GM12878 (cell line): ENCODE measurements at regions of chr14 and their contacts with region 1.

Region 1: DNA sequence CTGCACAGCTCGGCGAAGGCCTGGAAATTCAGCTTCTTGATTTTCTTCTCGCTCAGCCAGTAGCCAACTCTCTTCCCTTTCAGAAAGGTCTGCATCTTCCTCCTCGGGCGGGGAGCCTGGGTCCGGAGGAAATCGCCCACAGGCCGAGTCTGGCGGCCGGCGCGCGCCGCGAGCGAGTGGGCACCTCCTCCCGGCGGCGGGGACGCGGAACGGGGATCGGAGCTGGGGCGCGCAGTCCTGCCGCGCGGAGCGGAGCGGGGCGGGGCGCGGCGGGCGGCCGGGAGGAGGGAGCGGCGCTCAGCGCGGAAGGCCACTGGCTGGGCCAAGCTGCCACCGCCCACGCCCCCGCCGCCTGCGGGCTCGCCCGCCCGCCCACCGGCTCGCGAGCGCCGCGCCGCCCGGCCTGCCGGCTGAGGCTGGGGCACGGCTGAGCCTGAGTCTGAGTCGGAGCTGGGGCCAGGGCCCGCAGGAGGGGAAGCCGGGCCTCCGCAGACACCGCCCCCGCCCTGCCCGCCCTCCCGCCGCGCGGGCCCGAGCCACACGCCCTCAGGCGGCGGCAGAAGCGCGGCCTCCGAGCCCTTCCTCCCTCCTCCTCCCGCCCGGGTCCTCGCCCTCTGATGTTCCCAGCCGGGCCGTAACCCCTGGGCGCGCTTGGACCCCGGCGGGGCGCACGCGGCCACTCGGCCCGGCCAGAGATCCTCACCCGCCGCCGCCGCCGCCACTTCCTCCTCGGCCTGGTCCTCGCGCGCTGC is 480 bp downstream of the ITPK1 start:
- DNase-seq: peak; percentile 33
- ATAC-seq: peak; percentile 79
- H3K4me3 ChIP-seq: peak overlapping the region; percentile 99
- H3K27ac ChIP-seq: peak overlapping the region; percentile 38
- H3K4me1 ChIP-seq: peaks cover 13% of the 10 kb centered on the region
- H3K27me3 ChIP-seq: no peaks in the 10 kb centered on the region
- CTCF ChIP-seq: peak in 1 of 3 experiments; percentile 1; a peak in 1 of 6 replicates
- EP300 ChIP-seq: no peak
- POLR2A ChIP-seq: peak; percentile 66; the same call in 1 of the 2 replicates
- RAD21 ChIP-seq: no peak

Region 2: DNA sequence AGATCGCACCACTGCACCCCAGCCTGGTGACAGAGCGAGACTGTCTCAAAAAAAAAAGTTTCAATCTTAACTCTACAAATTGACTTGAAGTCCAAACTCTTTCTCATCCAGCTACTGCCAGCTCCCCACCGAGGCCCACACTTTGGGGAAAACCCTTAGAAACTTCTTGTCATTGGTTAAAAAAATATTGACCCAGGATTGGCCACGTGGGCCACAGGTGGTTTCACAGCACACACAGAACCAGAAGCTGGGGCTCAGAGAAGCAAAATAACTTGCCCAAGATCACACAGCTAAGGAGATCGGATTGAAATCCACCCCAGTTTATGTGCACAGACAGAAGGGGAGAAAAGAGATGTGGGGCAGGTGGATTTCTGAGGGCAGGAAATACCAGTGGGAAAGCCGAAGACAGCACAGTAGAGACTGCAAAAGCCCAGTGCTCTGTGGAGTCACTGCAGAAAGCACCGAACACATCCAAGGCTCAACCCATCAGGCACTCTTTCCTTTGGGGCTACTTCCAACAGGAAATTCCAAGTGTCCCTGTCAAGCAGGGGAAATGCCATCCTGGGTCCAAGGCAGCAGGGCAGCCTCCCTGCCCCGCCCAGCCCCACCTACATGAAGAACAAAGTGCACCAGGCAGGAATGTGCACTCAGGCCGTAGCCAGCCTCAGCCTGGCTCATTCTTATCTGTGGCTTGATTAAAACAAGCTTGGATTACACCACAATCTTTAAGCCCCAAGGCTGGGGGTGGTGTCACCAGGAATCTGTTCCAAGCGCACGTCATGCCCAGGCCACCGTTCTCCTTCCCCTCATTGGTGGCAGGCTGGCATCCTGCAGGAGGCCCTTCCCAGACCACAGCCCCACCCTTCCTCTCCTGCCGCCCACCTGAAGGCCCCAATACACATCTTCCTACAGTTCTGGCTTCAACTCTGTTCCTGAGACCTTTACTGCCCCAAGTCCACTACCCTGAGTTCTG is 72.0 kb before region 1 on chr14:
- CTCF ChIA-PET with region 1: interaction called, 13 read pairs
- POLR2A ChIA-PET with region 1: no interaction called
- RAD21 ChIA-PET with region 1: interaction called, 19 read pairs
- SMC1A ChIA-PET with region 1: interaction called, 7 read pairs
- in situ Hi-C with region 1: no loop called
- intact Hi-C with region 1: no loop called
- DNase-seq: no peak
- ATAC-seq: peak; percentile 52
- H3K4me3 ChIP-seq: no peak overlapping the region
- H3K27ac ChIP-seq: peak overlapping the region; percentile 33; the same call in 1 of the 2 replicates
- H3K4me1 ChIP-seq: peaks cover 32% of the 10 kb centered on the region
- H3K27me3 ChIP-seq: no peaks in the 10 kb centered on the region
- CTCF ChIP-seq: no peak
- EP300 ChIP-seq: no peak
- POLR2A ChIP-seq: no peak
- RAD21 ChIP-seq: no peak

Region 3: DNA sequence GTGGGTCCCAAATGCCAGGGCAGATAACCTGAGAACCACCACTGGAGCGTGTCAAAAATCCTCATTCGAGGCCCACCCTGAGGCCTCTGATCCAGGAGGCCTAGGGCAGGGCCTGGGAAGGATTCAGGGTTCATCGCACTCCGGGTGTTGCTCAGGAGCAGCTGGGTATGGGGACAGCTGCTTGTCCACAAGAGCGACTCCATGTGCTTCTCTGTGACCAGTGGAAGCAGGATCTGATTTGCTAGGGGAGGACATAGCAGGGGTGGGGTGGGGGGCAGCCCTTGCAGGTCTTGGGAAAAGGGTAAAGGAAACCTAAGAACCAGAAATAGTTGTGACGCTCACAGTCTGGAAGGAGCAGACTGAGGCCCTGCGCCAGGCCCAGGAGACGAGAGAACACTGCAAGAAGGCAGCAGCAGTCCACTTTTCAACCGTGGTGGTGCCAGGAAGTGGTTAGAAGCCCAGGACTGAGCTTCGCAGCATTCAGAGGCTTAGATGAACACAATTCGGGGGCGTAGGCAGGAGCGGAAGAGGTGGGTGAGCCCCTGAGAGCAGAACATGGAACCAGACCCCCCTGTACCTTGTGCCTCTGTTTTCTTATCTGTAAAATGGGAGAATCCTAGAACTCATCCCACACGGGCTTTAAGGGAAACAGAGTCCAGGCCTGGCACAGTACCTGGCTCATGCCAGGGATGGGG is 33.2 kb before region 1 on chr14:
- CTCF ChIA-PET with region 1: interaction called, 16 read pairs
- POLR2A ChIA-PET with region 1: no interaction called
- RAD21 ChIA-PET with region 1: interaction called, 11 read pairs
- SMC1A ChIA-PET with region 1: interaction called, 4 read pairs
- in situ Hi-C with region 1: no loop called
- intact Hi-C with region 1: no loop called
- DNase-seq: no peak
- ATAC-seq: peak; percentile 74
- H3K4me3 ChIP-seq: peak overlapping the region; percentile 6; the same call in 1 of the 2 replicates
- H3K27ac ChIP-seq: peak overlapping the region; percentile 26
- H3K4me1 ChIP-seq: peaks cover 37% of the 10 kb centered on the region
- H3K27me3 ChIP-seq: no peaks in the 10 kb centered on the region
- CTCF ChIP-seq: no peak
- EP300 ChIP-seq: no peak
- POLR2A ChIP-seq: peak; percentile 67
- RAD21 ChIP-seq: no peak

Region 4: GRCh38 chr14:93146119-93146518 is 30.9 kb after region 1 on chr14:
- CTCF ChIA-PET with region 1: interaction called, 91 read pairs
- POLR2A ChIA-PET with region 1: interaction called, 4 read pairs
- RAD21 ChIA-PET with region 1: interaction called, 163 read pairs
- SMC1A ChIA-PET with region 1: interaction called, 16 read pairs
- in situ Hi-C with region 1: no loop called
- intact Hi-C with region 1: no loop called
- DNase-seq: no peak
- ATAC-seq: peak; percentile 85
- H3K4me3 ChIP-seq: no peak overlapping the region
- H3K27ac ChIP-seq: no peak overlapping the region
- H3K4me1 ChIP-seq: peaks cover 4% of the 10 kb centered on the region; the same call in 1 of the 2 replicates
- H3K27me3 ChIP-seq: no peaks in the 10 kb centered on the region
- CTCF ChIP-seq: no peak
- EP300 ChIP-seq: peak in 1 of 2 experiments; percentile 64; a peak in 1 of 4 replicates
- POLR2A ChIP-seq: no peak
- RAD21 ChIP-seq: no peak

Region 5: DNA sequence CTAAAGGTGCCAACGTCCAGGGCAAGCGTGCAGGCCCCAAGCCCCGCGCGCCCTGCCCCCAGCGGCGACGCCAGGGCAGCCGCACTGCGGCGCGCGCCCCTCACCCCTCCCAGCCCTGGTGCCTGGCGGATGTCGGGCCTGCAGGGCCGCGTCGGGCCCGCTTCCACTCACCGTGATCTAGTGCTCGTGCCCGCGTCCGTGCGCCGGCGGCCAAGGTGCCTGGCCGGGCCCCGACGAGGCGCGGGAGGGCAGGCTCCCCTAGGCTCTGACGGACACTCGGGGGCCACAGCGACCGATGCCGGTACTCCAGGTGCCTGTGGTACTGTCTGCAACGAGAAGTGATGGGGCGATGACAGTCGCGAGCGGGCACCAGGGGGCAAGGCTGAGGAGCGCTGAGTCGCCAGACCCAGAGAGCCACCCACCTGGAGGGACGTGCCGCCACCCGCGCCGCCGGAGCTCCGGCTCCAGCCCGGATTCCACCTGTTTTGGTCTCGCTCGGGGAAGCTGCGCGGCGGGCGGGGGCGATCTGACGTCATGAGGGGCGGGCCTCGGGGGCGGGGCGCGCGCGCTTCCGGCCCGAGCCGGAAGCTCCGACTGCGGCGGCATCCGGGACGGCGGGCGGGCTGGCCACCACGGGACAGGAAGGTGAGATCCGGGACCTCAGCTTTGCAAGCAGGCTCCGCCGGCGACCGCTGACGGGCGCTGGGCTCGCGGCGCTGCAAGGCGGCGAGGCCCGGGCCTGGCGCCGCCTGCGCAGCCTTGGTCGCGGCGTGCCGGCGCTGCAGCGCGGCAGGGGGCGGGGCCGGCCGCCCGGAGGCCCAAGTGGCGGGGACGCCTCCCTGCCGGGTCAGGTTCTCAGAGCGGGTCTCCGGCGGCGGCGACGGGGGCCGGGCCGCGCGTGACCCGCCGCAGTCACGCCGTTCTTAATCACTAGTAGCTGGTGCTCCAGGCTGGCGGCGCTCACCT is 69.4 kb after region 1 on chr14 and contains the starts of genes LYSET and MOAP1:
- CTCF ChIA-PET with region 1: interaction called, 34 read pairs
- POLR2A ChIA-PET with region 1: interaction called, 7 read pairs
- RAD21 ChIA-PET with region 1: interaction called, 32 read pairs
- SMC1A ChIA-PET with region 1: interaction called, 22 read pairs
- in situ Hi-C with region 1: no loop called
- intact Hi-C with region 1: no loop called
- DNase-seq: no peak
- ATAC-seq: peak; percentile 92
- H3K4me3 ChIP-seq: peak within 1 kb of the TSS; percentile 88
- H3K27ac ChIP-seq: peak within 1 kb of the TSS; percentile 92
- H3K4me1 ChIP-seq: peaks cover 9% of the 10 kb centered on the region
- H3K27me3 ChIP-seq: no peaks in the 10 kb centered on the region
- CTCF ChIP-seq: peak; percentile 14 to 25 (median 25); a peak in 4 of 6 replicates
- EP300 ChIP-seq: no peak
- POLR2A ChIP-seq: peak; percentile 88
- RAD21 ChIP-seq: 0 out of 2 replicates have a peak, but pooled peaks have one; percentile 24
- polyA plus RNA-seq, gene LYSET: 33.4 to 34.5 TPM
- polyA plus RNA-seq, gene MOAP1: 3.1 to 5.2 TPM

Region 6: DNA sequence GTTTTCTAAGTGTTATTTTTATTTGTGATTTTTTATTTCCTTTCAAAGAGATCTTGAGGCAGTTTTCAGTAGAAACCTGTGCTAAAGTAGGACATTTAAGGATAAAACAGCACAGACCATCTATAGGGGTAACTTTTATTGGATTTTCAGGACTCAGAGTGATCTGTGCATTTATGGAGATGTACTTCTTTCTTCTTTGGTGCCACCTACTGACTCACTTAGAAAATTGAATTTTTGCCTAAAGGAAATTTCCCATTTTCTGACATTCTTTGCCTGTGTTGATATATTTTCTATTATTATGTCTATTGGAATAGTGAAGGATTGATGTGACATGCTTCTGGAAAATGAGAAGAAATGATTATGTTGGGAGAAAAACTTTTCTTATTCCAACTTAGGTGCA is 428.5 kb after region 1 on chr14:
- CTCF ChIA-PET with region 1: interaction called, 23 read pairs
- POLR2A ChIA-PET with region 1: no interaction called
- RAD21 ChIA-PET with region 1: interaction called, 5 read pairs
- SMC1A ChIA-PET with region 1: interaction called, 7 read pairs
- in situ Hi-C with region 1: no loop called
- intact Hi-C with region 1: no loop called
- DNase-seq: no peak
- ATAC-seq: no peak
- H3K4me3 ChIP-seq: no peak overlapping the region
- H3K27ac ChIP-seq: no peak overlapping the region
- H3K4me1 ChIP-seq: no peaks in the 10 kb centered on the region
- H3K27me3 ChIP-seq: no peaks in the 10 kb centered on the region
- CTCF ChIP-seq: peak; percentile 22 to 53 (median 33); a peak in 4 of 6 replicates
- EP300 ChIP-seq: no peak
- POLR2A ChIP-seq: no peak
- RAD21 ChIP-seq: peak; percentile 55